ENCODE measurements at regions of chr2 and their contacts with region 1.

Region 1: GRCh38 chr2:15378148-15378908 is 182.8 kb downstream of the NBAS start:
- DNase-seq: no peak
- H3K4me3 Mint-ChIP-seq: no peak overlapping the region
- H3K27ac Mint-ChIP-seq: peak overlapping the region; percentile 64
- H3K4me1 Mint-ChIP-seq: peaks cover 34% of the 10 kb centered on the region
- H3K27me3 Mint-ChIP-seq: no peaks in the 10 kb centered on the region

Region 2: GRCh38 chr2:15313657-15314056 is 64.7 kb before region 1 on chr2:
- intact Hi-C with region 1: loop called (anchors 5 kb)
- DNase-seq: no peak
- H3K4me3 Mint-ChIP-seq: no peak overlapping the region
- H3K27ac Mint-ChIP-seq: no peak overlapping the region
- H3K4me1 Mint-ChIP-seq: peaks cover 68% of the 10 kb centered on the region
- H3K27me3 Mint-ChIP-seq: no peaks in the 10 kb centered on the region